Dendritic cell treated with granulocyte-macrophage colony-stimulating factor and Interleukin-4, amounts not matched to agents 40 ng/mL and 50 ng/mL, for 4 days (primary cell): ENCODE measurements at regions of chr7 and their contacts with region 1.

Region 1: GRCh38 chr7:84876061-84876821 is 310.6 kb downstream of the SEMA3D start:
- H3K4me3 Mint-ChIP-seq: no peak overlapping the region
- H3K27ac Mint-ChIP-seq: no peak overlapping the region
- H3K4me1 Mint-ChIP-seq: no peaks in the 10 kb centered on the region
- H3K27me3 Mint-ChIP-seq: no peaks in the 10 kb centered on the region

Region 2: GRCh38 chr7:84663224-84663623 is 213.0 kb before region 1 on chr7:
- intact Hi-C with region 1: no loop called
- H3K4me3 Mint-ChIP-seq: no peak overlapping the region
- H3K27ac Mint-ChIP-seq: no peak overlapping the region
- H3K4me1 Mint-ChIP-seq: no peaks in the 10 kb centered on the region
- H3K27me3 Mint-ChIP-seq: no peaks in the 10 kb centered on the region

Region 3: DNA sequence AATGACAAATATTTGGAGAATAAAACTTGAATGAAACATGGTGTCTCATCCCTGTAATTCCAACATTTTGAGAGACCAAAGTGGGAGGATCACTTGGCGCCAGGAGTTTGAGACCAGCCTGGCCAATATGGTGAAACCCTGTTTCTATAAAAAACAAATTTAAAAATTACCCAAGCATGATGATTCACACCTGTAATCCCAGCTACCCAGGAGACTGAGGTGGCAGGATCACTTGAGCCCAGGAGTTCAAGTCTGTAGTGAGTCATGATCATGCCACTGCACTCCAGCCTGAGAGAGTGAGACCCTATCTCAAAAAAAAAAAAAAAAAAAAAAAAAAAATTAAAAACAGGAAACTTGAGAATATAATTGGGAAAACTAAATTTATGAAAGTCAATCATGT is 170.5 kb before region 1 on chr7:
- intact Hi-C with region 1: no loop called
- H3K4me3 Mint-ChIP-seq: no peak overlapping the region
- H3K27ac Mint-ChIP-seq: no peak overlapping the region
- H3K4me1 Mint-ChIP-seq: no peaks in the 10 kb centered on the region
- H3K27me3 Mint-ChIP-seq: no peaks in the 10 kb centered on the region

Region 4: DNA sequence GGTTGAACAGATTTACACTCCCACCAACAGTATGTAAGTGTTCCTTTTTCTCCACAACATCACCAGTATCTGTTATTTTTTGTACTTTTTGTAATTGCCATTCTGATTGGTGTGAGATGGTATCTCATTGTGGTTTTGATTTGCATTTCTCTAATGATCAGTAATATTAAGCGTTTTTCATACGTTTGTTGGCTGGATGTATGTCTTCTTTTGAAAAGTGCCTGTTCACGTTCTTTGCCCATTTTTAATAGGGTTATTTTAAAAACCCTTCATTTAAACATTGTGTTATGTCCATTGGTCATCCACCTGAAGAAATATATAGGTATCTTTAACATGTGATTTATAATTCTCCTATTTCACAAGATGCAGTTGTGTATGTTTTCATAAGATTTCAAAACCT is 19.3 kb after region 1 on chr7:
- intact Hi-C with region 1: loop called (anchors 1 kb)
- H3K4me3 Mint-ChIP-seq: no peak overlapping the region
- H3K27ac Mint-ChIP-seq: no peak overlapping the region
- H3K4me1 Mint-ChIP-seq: no peaks in the 10 kb centered on the region
- H3K27me3 Mint-ChIP-seq: no peaks in the 10 kb centered on the region